ENCODE measurements at regions of chr2 and their contacts with region 1.

Region 1: GRCh38 chr2:228329282-228329681 is 147.8 kb upstream of the SPHKAP start:
- DNase-seq: no peak
- H3K4me3 ChIP-seq: no peak overlapping the region
- H3K27ac ChIP-seq: no peak overlapping the region
- H3K4me1 ChIP-seq: no peaks in the 10 kb centered on the region
- H3K27me3 ChIP-seq: no peaks in the 10 kb centered on the region
- CTCF ChIP-seq: no peak
- POLR2A ChIP-seq: no peak

Region 2: GRCh38 chr2:228303946-228304345 is 25.3 kb before region 1 on chr2:
- intact Hi-C with region 1: no loop called
- DNase-seq: no peak
- H3K4me3 ChIP-seq: no peak overlapping the region
- H3K27ac ChIP-seq: no peak overlapping the region
- H3K4me1 ChIP-seq: no peaks in the 10 kb centered on the region
- H3K27me3 ChIP-seq: no peaks in the 10 kb centered on the region
- CTCF ChIP-seq: no peak
- POLR2A ChIP-seq: no peak

Region 3: DNA sequence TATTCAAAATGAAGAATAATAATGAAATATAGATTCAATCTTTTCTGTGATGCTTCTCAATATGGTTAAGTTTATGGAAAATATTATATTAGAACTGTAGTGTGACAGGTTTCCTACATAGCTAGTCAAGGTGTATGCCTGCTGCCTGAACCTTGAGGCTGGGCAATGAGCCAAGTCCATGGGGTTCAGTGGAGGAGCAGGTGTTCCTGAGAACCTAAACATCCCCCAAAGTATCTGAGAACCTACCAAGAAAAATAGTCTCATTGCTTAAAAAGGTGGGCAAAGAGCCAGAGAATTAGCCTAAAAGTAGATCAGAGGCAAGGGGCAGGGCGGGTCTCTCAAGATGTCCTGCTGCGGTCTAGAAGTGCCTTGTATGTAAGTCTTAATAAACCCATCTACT is 38.1 kb after region 1 on chr2:
- intact Hi-C with region 1: loop called (anchors 2 kb)
- DNase-seq: no peak
- H3K4me3 ChIP-seq: no peak overlapping the region
- H3K27ac ChIP-seq: no peak overlapping the region
- H3K4me1 ChIP-seq: no peaks in the 10 kb centered on the region
- H3K27me3 ChIP-seq: no peaks in the 10 kb centered on the region
- CTCF ChIP-seq: no peak
- POLR2A ChIP-seq: no peak

Region 4: GRCh38 chr2:228493852-228494251 is 164.6 kb after region 1 on chr2:
- intact Hi-C with region 1: no loop called
- DNase-seq: no peak
- H3K4me3 ChIP-seq: no peak overlapping the region
- H3K27ac ChIP-seq: no peak overlapping the region
- H3K4me1 ChIP-seq: no peaks in the 10 kb centered on the region
- H3K27me3 ChIP-seq: no peaks in the 10 kb centered on the region
- CTCF ChIP-seq: no peak
- POLR2A ChIP-seq: no peak

Measured in vagina (tissue), 2 donors.